AG04449 (cell line): ENCODE measurements at regions of chr15 and their contacts with region 1.

Region 1: DNA sequence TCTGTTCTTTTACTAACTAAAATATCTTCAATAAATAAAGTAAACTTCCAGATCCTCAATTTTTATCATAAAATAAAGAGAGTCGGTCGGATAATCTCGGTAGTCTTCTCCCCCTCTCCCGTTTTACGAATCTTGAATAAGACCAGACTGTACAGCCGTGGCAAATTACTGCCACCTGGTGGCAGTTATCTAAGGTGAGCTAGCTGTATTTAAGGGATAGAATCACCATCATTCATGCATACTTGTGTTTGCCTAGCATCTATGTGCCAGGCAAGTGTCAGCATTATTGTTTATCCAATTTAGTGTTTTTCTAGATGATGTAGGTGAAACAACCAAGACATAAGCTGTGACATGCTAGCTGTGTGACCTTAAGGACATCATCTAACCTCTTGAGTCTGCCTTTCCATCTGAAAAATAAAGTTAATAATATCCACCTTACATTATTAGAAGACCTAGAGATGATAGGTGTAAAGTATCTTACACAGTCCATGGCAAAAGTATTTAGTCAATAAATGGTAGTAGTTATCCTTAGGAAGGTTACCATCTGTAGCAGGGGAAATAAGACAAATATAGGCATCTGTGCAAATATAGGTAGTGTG is 21.3 kb downstream of the DUT start:
- DNase-seq: no peak
- H3K4me3 ChIP-seq: no peak overlapping the region
- CTCF ChIP-seq: peak; percentile 63

Region 2: DNA sequence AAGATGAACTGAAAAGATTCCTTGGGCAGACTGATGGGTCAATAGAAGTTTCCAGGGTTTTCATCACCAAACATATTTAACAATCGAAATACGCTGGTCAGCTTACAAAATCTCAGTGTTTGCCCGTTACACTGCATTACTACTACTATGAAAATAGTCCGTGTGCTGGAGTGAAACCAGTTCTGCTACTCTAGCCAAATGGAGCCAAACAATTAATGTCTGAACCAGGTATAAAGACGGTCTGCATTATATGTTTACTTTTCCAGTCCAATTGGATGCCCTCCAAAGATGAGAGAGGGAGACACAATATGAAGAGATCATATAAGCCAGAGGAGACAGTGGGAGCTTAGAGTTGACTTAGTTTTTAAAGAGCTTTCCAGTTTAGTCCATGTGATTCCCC is 27.7 kb before region 1 on chr15:
- CTCF ChIA-PET with region 1: no interaction called
- POLR2A ChIA-PET with region 1: no interaction called
- DNase-seq: no peak
- H3K4me3 ChIP-seq: no peak overlapping the region
- CTCF ChIP-seq: no peak

Region 3: GRCh38 chr15:48336940-48337339 is 15.6 kb before region 1 on chr15:
- CTCF ChIA-PET with region 1: interaction called, 32 read pairs
- POLR2A ChIA-PET with region 1: no interaction called
- DNase-seq: no peak
- H3K4me3 ChIP-seq: no peak overlapping the region
- CTCF ChIP-seq: peak; percentile 25

Region 4: GRCh38 chr15:48373821-48374451 is 21.4 kb after region 1 on chr15:
- CTCF ChIA-PET with region 1: interaction called, 17 read pairs
- POLR2A ChIA-PET with region 1: no interaction called
- DNase-seq: no peak
- H3K4me3 ChIP-seq: no peak overlapping the region
- CTCF ChIP-seq: no peak

Region 5: DNA sequence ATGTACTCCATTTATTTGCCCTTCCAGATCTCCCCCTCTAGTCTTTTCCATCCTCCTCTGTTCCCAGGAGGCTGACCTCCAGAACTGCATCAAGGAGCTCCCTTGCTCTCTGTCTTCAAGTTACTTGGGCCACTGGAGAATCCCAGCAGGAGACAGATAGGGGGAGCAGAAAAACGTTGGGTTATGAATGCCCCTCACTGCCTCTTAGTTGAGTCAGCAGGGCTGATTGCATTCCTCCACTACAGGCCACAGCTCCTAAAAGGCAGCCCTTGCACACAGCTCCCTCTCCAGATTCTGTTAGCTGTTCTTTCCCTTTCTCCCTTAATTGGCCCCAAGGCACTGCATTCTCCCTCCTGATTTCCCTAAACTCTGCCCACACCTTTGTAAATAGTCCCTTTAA is 470.7 kb after region 1 on chr15:
- CTCF ChIA-PET with region 1: no interaction called
- POLR2A ChIA-PET with region 1: no interaction called
- DNase-seq: no peak
- H3K4me3 ChIP-seq: no peak overlapping the region
- CTCF ChIP-seq: peak; percentile 6